ENCODE measurements at regions of chr5 and their contacts with region 1.

Region 1: DNA sequence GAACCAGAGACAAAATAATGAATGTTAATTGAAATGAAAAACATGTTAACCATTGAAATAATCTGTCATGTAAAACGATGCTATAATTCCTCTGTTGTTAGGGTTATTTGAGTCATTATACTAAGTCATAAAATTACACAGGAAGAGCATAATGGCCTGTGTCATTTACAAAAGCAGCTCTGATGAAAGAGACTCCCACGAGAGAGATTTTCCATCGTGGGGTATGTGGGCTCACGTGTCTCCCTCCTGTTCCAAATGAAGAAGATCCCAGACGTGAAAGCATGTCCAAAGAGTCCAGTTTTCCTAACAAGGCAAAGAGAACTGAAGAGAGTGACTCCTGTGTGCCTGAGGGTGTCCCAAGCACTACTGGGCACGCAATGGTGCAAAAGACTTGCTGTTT is 379.8 kb downstream of the SPOCK1 start:
- DNase-seq: no peak
- H3K4me3 ChIP-seq: no peak overlapping the region
- H3K27ac ChIP-seq: no peak overlapping the region
- H3K4me1 ChIP-seq: peaks cover 17% of the 10 kb centered on the region
- H3K27me3 ChIP-seq: no peaks in the 10 kb centered on the region
- CTCF ChIP-seq: no peak
- POLR2A ChIP-seq: no peak

Region 2: DNA sequence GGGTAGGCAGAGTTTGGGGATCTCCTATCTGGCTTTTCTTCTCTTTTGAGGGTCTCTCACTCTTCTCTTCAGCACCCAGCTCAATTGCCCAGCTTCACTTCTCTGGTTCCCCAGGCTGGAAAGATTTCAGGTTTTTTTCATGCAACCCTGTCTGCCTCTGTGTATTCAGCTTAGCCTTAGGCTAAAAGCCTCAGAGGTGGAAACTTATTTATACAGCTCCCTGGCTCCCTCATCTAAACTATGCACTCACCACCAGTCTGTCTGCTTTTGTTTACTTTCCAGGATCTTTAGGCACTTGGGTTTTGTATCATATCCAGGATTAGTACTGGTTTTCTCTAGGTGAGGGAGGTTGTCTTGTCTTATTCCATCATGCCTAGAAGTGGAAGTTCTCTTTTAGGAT is 213.7 kb before region 1 on chr5:
- CTCF ChIA-PET with region 1: no interaction called
- POLR2A ChIA-PET with region 1: no interaction called
- dilution Hi-C with region 1: no loop called
- intact Hi-C with region 1: no loop called
- DNase-seq: no peak
- H3K4me3 ChIP-seq: no peak overlapping the region
- H3K27ac ChIP-seq: no peak overlapping the region
- H3K4me1 ChIP-seq: no peaks in the 10 kb centered on the region
- H3K27me3 ChIP-seq: peaks cover 15 to 23% of the 10 kb centered on the region in 2 experiments
- CTCF ChIP-seq: no peak
- POLR2A ChIP-seq: no peak

Region 3: GRCh38 chr5:137136991-137137632 is 17.8 kb after region 1 on chr5:
- CTCF ChIA-PET with region 1: no interaction called
- POLR2A ChIA-PET with region 1: no interaction called
- dilution Hi-C with region 1: no loop called
- intact Hi-C with region 1: loop called (anchors 1 kb)
- DNase-seq: peak; percentile 42
- H3K4me3 ChIP-seq: no peak overlapping the region
- H3K27ac ChIP-seq: no peak overlapping the region
- H3K4me1 ChIP-seq: peaks cover 3% of the 10 kb centered on the region
- H3K27me3 ChIP-seq: no peaks in the 10 kb centered on the region
- CTCF ChIP-seq: no peak
- POLR2A ChIP-seq: no peak

Region 4: DNA sequence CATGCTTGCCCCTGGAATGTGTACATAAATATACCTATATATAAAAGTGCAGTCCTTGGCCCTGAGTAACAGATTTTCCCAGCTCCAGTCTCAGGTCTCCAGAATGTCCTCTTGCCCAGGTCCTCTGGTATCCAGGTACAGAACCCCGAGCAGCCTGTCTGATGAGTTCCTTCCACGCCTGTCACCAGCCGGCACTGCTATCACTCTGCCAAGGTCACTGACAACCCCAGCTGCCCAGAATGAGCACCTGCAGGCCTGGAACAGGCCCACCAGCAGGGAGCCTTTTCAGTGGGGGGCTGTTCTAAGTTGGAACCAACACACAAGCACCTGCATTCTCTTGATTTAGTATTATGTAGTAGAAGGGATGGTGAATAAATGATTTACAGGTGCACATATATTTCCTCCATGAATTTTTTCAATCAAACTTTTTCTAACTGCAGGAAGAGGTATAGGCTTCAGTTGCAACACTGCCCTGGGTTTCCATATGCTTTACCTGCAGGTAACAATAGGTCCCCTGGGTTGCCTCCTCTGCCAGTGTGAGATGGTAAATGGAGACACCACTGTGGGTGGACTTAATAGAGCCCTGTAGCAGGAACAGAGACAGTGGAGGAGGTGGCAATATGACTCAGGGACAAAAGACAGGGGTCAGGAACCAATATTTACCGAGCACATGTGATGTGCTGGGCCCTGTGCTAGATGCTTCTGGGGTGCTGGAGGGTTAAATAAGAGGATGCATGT is 87.9 kb after region 1 on chr5:
- CTCF ChIA-PET with region 1: no interaction called
- POLR2A ChIA-PET with region 1: no interaction called
- dilution Hi-C with region 1: no loop called
- intact Hi-C with region 1: no loop called
- DNase-seq: no peak
- H3K4me3 ChIP-seq: no peak overlapping the region
- H3K27ac ChIP-seq: no peak overlapping the region
- H3K4me1 ChIP-seq: peaks cover 34% of the 10 kb centered on the region
- H3K27me3 ChIP-seq: no peaks in the 10 kb centered on the region
- CTCF ChIP-seq: no peak
- POLR2A ChIP-seq: no peak